Dendritic cell treated with granulocyte-macrophage colony-stimulating factor and Interleukin-4, amounts not matched to agents 40 ng/mL and 50 ng/mL, for 4 days (primary cell): ENCODE measurements at regions of chr3 and their contacts with region 1.

Region 1: DNA sequence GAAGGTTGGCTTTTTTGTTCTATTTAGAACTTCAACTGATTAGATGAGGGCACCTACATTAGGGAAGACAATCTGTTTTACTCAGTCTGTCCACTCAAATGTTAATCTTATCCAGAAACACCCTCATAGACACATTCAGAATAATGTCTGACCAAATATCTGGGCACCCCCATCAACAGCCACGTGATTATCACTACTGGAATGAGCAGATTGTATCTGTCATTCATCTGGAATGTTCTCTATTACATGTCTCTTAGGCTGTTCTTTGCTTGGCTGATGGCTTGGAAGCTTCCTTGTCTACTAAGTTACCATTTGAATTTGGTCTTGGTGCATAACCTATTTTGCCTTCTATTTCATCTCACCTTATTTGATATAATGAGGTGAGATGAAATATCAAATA is 15.7 kb upstream of the LRRC58 start:
- H3K4me3 Mint-ChIP-seq: no peak overlapping the region
- H3K27ac Mint-ChIP-seq: no peak overlapping the region
- H3K4me1 Mint-ChIP-seq: no peaks in the 10 kb centered on the region
- H3K27me3 Mint-ChIP-seq: peaks cover 3% of the 10 kb centered on the region

Region 2: DNA sequence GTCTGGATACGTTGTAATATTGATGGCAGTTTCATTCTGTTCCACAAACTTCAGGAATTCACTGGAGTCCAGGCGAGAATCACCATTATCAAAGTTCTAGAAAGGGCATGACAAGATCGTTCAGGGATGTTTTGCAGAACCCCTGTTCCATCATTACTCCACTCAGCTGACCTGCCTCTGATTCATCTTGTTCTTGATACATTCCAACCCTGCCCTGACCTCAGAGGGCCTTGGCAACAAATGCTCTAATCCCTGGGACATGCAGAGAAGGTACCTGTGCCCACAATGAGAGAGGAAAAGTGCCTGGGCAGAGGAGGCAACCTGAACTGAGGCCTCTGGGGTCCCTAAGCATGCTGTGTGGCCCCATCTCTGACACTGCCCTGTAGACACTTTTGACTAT is 40.1 kb after region 1 on chr3:
- intact Hi-C with region 1: loop called (anchors 2 kb)
- H3K4me3 Mint-ChIP-seq: no peak overlapping the region
- H3K27ac Mint-ChIP-seq: no peak overlapping the region
- H3K4me1 Mint-ChIP-seq: peaks cover 17% of the 10 kb centered on the region
- H3K27me3 Mint-ChIP-seq: no peaks in the 10 kb centered on the region

Region 3: GRCh38 chr3:120506828-120507774 is 142.3 kb after region 1 on chr3:
- intact Hi-C with region 1: no loop called
- H3K4me3 Mint-ChIP-seq: no peak overlapping the region
- H3K27ac Mint-ChIP-seq: no peak overlapping the region
- H3K4me1 Mint-ChIP-seq: peaks cover 11% of the 10 kb centered on the region
- H3K27me3 Mint-ChIP-seq: peaks cover 5% of the 10 kb centered on the region